ENCODE measurements at regions of chr1 and their contacts with region 1.

Region 1: GRCh38 chr1:91929250-91929649 is 20.0 kb upstream of the BRDT start:
- DNase-seq: no peak
- H3K4me3 ChIP-seq: no peak overlapping the region
- H3K4me3 Mint-ChIP-seq: no peak overlapping the region
- H3K27ac ChIP-seq: no peak overlapping the region
- H3K27ac Mint-ChIP-seq: peak overlapping the region in 1 of 7 donors; percentile 76
- H3K4me1 ChIP-seq: no peaks in the 10 kb centered on the region
- H3K4me1 Mint-ChIP-seq: no peaks in the 10 kb centered on the region
- H3K27me3 ChIP-seq: no peaks in the 10 kb centered on the region
- H3K27me3 Mint-ChIP-seq: peaks cover 0 to 3% (median 1%) of the 10 kb centered on the region in 3 donors
- CTCF ChIP-seq: no peak

Region 2: GRCh38 chr1:91165033-91165654 is 764.1 kb before region 1 on chr1:
- intact Hi-C with region 1: loop called in 1 of 2 experiments (anchors 5 kb)
- DNase-seq: peak; percentile 34 to 57 (median 56)
- H3K4me3 ChIP-seq: no peak overlapping the region
- H3K4me3 Mint-ChIP-seq: peak overlapping the region in 1 of 2 donors; percentile 47
- H3K27ac ChIP-seq: no peak overlapping the region
- H3K27ac Mint-ChIP-seq: no peak overlapping the region
- H3K4me1 ChIP-seq: no peaks in the 10 kb centered on the region
- H3K4me1 Mint-ChIP-seq: peaks cover 4% of the 10 kb centered on the region
- H3K27me3 ChIP-seq: peaks cover 0 to 3% of the 10 kb centered on the region in 2 donors
- H3K27me3 Mint-ChIP-seq: peaks cover 2 to 9% (median 3%) of the 10 kb centered on the region in 3 donors
- CTCF ChIP-seq: peak; percentile 93

Region 3: DNA sequence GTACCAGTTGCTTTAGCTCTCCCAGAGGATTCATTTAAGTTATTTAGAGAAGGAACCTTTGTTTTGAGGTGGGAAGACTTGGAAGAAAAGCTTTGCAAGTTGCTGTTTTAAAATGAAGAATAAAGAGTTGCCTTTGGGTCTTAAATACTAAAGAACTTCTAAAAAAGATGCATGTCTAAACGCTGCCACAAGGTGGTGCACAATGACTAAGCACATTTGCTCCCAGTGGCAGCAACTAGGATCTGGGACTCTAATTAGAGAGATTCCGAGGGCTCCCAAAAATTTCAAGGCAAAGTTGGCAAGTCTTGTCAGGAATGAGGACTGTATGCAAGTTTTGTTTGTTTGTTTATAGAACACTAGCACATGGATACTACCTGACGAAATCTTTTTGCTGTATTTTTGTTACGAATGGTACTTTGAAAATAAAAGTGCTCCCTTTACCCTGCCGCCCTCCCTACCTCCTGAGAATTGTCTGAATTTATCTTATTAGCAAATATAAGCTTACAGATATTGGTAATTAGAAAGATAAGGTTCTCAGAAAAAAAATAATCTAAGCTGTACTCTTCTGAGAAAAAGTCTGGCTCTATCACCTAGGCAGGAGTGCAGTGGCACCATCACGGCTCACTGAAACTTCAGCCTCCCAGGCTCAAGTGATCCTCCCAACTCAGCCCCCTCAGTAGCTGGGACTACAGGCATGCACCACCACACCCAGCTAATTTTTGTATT is 646.4 kb before region 1 on chr1:
- intact Hi-C with region 1: loop called (anchors 5 kb)
- DNase-seq: peak; percentile 16 to 39 (median 38)
- H3K4me3 ChIP-seq: peak overlapping the region in 1 of 3 experiments; percentile 19
- H3K4me3 Mint-ChIP-seq: peak overlapping the region in 1 of 2 donors; percentile 37
- H3K27ac ChIP-seq: no peak overlapping the region
- H3K27ac Mint-ChIP-seq: peak overlapping the region in 3 of 7 donors; percentile 28 to 57 (median 54)
- H3K4me1 ChIP-seq: peaks cover 0 to 4% of the 10 kb centered on the region in 2 donors
- H3K4me1 Mint-ChIP-seq: peaks cover 9% of the 10 kb centered on the region
- H3K27me3 ChIP-seq: no peaks in the 10 kb centered on the region
- H3K27me3 Mint-ChIP-seq: peaks cover 0 to 1% (median 0%) of the 10 kb centered on the region in 3 donors
- CTCF ChIP-seq: peak; percentile 85

Region 4: DNA sequence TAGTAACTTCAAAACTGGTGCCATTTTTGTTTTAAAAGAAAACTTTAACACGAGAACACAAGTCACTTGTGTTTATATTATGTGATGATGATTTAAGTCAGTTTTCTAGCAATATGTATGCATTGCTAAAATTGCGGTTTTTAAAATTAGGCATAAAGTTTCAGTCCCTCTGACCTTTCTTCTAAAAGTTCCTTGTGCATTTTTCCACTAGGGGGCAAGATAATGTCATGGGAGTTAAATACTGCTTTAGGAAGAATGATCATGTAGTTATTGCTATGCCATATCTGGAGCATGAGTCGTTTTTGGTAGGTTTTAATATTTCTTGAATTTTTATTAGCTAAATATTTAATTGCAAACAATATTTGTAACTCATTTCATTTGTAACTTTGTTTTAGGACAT is 417.9 kb before region 1 on chr1:
- intact Hi-C with region 1: loop called (anchors 5 kb)
- DNase-seq: peak in 2 of 3 donors; percentile 13 to 18
- H3K4me3 ChIP-seq: no peak overlapping the region
- H3K4me3 Mint-ChIP-seq: no peak overlapping the region
- H3K27ac ChIP-seq: no peak overlapping the region
- H3K27ac Mint-ChIP-seq: no peak overlapping the region
- H3K4me1 ChIP-seq: no peaks in the 10 kb centered on the region
- H3K4me1 Mint-ChIP-seq: no peaks in the 10 kb centered on the region
- H3K27me3 ChIP-seq: no peaks in the 10 kb centered on the region
- H3K27me3 Mint-ChIP-seq: no peaks in the 10 kb centered on the region
- CTCF ChIP-seq: peak; percentile 60

Region 5: DNA sequence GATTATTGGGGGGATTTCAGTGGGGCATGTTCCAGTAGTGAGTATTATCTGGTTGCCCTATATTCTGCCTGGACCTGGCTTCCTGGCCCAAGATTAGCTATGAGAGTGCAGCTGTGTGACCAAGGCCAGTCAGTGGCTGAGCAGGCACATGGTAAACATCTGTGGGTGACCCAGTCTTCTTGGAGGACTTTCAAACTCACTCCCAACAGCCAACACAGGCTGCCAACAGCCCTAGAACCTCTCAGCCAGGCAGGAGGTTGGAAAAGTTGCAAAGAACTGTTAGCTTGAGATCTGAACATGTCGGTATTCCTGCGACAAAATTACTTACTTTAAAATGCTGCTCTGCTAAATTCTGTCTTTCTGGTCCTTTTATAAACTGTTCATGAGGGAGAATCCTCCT is 235.7 kb before region 1 on chr1:
- intact Hi-C with region 1: no loop called
- DNase-seq: no peak
- H3K4me3 ChIP-seq: no peak overlapping the region
- H3K4me3 Mint-ChIP-seq: no peak overlapping the region
- H3K27ac ChIP-seq: no peak overlapping the region
- H3K27ac Mint-ChIP-seq: no peak overlapping the region
- H3K4me1 ChIP-seq: peaks cover 2 to 9% of the 10 kb centered on the region in 2 donors
- H3K4me1 Mint-ChIP-seq: peaks cover 19% of the 10 kb centered on the region
- H3K27me3 ChIP-seq: no peaks in the 10 kb centered on the region
- H3K27me3 Mint-ChIP-seq: peaks cover 0 to 7% (median 2%) of the 10 kb centered on the region in 3 donors
- CTCF ChIP-seq: no peak

Region 6: DNA sequence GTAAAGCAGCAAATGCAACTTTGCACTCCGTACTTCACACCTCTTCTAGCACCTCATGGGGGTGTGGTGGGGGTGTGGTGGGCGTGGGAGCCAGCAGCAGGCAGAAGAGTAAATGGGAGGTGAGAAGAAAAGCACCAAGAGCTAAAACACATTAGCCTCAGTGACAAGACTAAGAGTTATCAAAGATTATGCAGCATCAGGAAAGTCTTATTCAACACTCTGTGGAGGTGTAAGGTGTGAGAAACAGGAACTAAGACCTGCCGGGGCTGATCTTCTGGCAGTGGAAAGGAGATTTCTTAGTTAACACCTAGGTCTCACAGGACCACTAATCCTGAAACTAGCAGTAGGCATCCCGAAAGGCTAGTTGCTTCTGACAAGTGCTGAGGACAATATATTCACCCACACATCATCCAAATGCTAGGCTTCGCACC is 53.2 kb before region 1 on chr1:
- intact Hi-C with region 1: no loop called
- DNase-seq: no peak
- H3K4me3 ChIP-seq: no peak overlapping the region
- H3K4me3 Mint-ChIP-seq: no peak overlapping the region
- H3K27ac ChIP-seq: no peak overlapping the region
- H3K27ac Mint-ChIP-seq: no peak overlapping the region
- H3K4me1 ChIP-seq: no peaks in the 10 kb centered on the region
- H3K4me1 Mint-ChIP-seq: no peaks in the 10 kb centered on the region
- H3K27me3 ChIP-seq: peaks cover 3 to 10% of the 10 kb centered on the region in 2 donors
- H3K27me3 Mint-ChIP-seq: peaks cover 6 to 16% (median 14%) of the 10 kb centered on the region in 3 donors
- CTCF ChIP-seq: no peak

Region 7: DNA sequence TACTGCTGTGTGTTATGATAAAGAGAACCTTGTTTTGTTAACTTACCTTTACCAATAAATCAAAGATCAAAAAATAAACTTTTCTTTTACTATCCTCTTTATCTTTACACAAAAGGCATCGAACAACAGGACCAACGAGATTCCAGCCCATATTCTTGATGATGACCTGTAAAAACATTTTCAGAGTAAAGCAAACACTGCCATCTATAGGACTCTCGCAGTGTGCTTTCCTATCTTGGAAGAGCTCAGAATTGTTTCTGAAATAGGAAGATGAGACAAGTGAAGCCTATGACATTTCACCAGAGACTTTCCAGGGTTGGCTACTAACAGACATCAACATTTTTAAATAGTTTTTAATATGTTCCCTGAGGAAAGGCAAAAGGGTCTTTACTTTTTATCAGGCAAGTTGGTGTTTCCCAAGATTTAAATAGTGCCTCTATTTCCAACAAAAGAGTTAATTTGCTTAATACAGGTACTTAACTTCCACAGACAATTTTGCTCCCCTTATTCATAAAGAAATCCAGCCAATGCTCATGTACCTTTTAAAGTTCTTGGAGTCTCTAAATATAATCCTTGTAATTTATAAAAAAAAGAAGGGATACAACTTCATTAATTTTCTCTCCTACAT is 362.2 kb after region 1 on chr1:
- intact Hi-C with region 1: no loop called
- DNase-seq: peak in 2 of 3 donors; percentile 17 to 38
- H3K4me3 ChIP-seq: no peak overlapping the region
- H3K4me3 Mint-ChIP-seq: no peak overlapping the region
- H3K27ac ChIP-seq: no peak overlapping the region
- H3K27ac Mint-ChIP-seq: no peak overlapping the region
- H3K4me1 ChIP-seq: no peaks in the 10 kb centered on the region
- H3K4me1 Mint-ChIP-seq: peaks cover 5% of the 10 kb centered on the region
- H3K27me3 ChIP-seq: no peaks in the 10 kb centered on the region
- H3K27me3 Mint-ChIP-seq: no peaks in the 10 kb centered on the region
- CTCF ChIP-seq: peak; percentile 62

Measured in CD14-positive monocyte (primary cell).